ENCODE measurements at regions of chr11 and their contacts with region 1.

Region 1: GRCh38 chr11:98194611-98195010 is 826.1 kb upstream of the CNTN5 start:
- DNase-seq: no peak
- H3K4me3 ChIP-seq: no peak overlapping the region
- CTCF ChIP-seq: no peak
- POLR2A ChIP-seq: no peak

Region 2: DNA sequence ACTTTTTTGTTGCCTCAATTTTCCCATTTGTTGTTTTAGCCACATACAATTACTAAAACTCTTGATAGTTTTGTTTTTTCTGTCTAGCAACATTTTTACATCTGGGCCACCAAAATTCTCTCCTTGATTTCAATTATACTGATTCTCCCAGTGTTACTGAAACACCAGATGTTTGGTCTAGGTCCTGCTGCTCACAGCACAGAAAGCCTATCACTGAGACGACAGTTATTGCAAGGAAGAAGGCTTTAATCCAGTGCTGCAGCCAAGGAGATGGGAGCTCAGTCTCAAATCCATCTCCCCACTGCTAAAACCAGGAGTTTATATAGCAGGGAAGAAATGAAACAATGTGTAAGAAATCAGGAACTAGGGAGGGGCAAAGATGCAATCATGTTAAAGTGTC is 11.6 kb before region 1 on chr11:
- intact Hi-C with region 1: loop called (anchors 1 kb)
- DNase-seq: no peak
- H3K4me3 ChIP-seq: no peak overlapping the region
- CTCF ChIP-seq: no peak
- POLR2A ChIP-seq: no peak

Region 3: DNA sequence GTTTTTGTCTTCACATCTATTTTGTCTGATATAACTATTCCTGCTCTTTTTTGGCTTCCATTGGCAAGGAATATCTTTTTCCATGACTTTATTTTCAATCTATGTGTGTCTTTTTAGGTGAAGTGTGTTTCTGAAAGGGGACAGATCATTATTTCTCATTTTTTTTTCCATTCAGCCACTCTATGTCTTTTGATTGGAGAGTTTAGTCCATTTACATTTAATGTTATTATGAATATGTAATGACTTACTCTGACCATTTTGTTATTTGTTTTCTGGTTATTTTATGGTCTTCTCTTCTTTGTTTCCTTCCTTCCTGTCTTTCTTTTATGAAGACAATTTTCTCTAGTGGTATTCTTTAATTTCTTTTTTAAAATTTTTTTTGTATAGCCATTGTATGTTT is 647.6 kb after region 1 on chr11:
- intact Hi-C with region 1: no loop called
- DNase-seq: no peak
- H3K4me3 ChIP-seq: no peak overlapping the region
- CTCF ChIP-seq: no peak
- POLR2A ChIP-seq: no peak